SK-N-SH (cell line): ENCODE measurements at regions of chr18 and their contacts with region 1.

Region 1: GRCh38 chr18:36296650-36297416 is 680 bp upstream of the FHOD3 start:
- DNase-seq: peak; percentile 86
- H3K4me3 ChIP-seq: peak overlapping the region; percentile 63 to 79
- H3K27ac ChIP-seq: peak overlapping the region; percentile 57 to 89
- H3K4me1 ChIP-seq: peaks cover 0 to 10% of the 10 kb centered on the region in 2 experiments; a peak in 2 of 4 replicates
- H3K27me3 ChIP-seq: peaks cover 6% of the 10 kb centered on the region; the same call in 1 of the 2 replicates
- CTCF ChIP-seq: peak; percentile 64
- EP300 ChIP-seq: no peak
- RAD21 ChIP-seq: peak; percentile 82

Region 2: GRCh38 chr18:36009214-36009613 is 287.6 kb before region 1 on chr18:
- CTCF ChIA-PET with region 1: no interaction called
- POLR2A ChIA-PET with region 1: no interaction called
- DNase-seq: no peak
- H3K4me3 ChIP-seq: no peak overlapping the region
- H3K27ac ChIP-seq: no peak overlapping the region
- H3K4me1 ChIP-seq: no peaks in the 10 kb centered on the region; a peak in 1 of 4 replicates
- H3K27me3 ChIP-seq: no peaks in the 10 kb centered on the region
- CTCF ChIP-seq: no peak
- EP300 ChIP-seq: no peak
- RAD21 ChIP-seq: no peak

Region 3: GRCh38 chr18:36309436-36310391 is 12.9 kb after region 1 on chr18:
- CTCF ChIA-PET with region 1: interaction called, 21 read pairs
- POLR2A ChIA-PET with region 1: interaction called, 13 read pairs
- DNase-seq: peak; percentile 73
- H3K4me3 ChIP-seq: no peak overlapping the region; a peak in 1 of 4 replicates
- H3K27ac ChIP-seq: peak overlapping the region; percentile 92 to 93
- H3K4me1 ChIP-seq: peaks cover 10 to 35% of the 10 kb centered on the region in 2 experiments
- H3K27me3 ChIP-seq: no peaks in the 10 kb centered on the region; the same call in 1 of the 2 replicates
- CTCF ChIP-seq: no peak
- EP300 ChIP-seq: peak in 1 of 2 experiments; percentile 92; a peak in 3 of 4 replicates
- RAD21 ChIP-seq: peak; percentile 13

Region 4: GRCh38 chr18:36411745-36412168 is 114.9 kb after region 1 on chr18:
- CTCF ChIA-PET with region 1: interaction called, 24 read pairs
- POLR2A ChIA-PET with region 1: interaction called, 3 read pairs
- DNase-seq: peak; percentile 41
- H3K4me3 ChIP-seq: peak overlapping the region in 1 of 2 experiments; percentile 5; a peak in 1 of 4 replicates
- H3K27ac ChIP-seq: no peak overlapping the region
- H3K4me1 ChIP-seq: peaks cover 0 to 16% of the 10 kb centered on the region in 2 experiments; a peak in 2 of 4 replicates
- H3K27me3 ChIP-seq: no peaks in the 10 kb centered on the region
- CTCF ChIP-seq: peak; percentile 52
- EP300 ChIP-seq: no peak
- RAD21 ChIP-seq: peak; percentile 56